Right cardiac atrium (tissue), 5 donors: ENCODE measurements at regions of chr20 and their contacts with region 1.

Region 1: GRCh38 chr20:2172305-2173175 is 70.9 kb downstream of the STK35 start:
- DNase-seq: peak; percentile 68 to 87 (median 79)
- ATAC-seq: peak; percentile 75 to 89
- H3K4me3 ChIP-seq: no peak overlapping the region
- H3K27ac ChIP-seq: no peak overlapping the region
- H3K4me1 ChIP-seq: peaks cover 2% of the 10 kb centered on the region
- H3K27me3 ChIP-seq: no peaks in the 10 kb centered on the region

Region 2: DNA sequence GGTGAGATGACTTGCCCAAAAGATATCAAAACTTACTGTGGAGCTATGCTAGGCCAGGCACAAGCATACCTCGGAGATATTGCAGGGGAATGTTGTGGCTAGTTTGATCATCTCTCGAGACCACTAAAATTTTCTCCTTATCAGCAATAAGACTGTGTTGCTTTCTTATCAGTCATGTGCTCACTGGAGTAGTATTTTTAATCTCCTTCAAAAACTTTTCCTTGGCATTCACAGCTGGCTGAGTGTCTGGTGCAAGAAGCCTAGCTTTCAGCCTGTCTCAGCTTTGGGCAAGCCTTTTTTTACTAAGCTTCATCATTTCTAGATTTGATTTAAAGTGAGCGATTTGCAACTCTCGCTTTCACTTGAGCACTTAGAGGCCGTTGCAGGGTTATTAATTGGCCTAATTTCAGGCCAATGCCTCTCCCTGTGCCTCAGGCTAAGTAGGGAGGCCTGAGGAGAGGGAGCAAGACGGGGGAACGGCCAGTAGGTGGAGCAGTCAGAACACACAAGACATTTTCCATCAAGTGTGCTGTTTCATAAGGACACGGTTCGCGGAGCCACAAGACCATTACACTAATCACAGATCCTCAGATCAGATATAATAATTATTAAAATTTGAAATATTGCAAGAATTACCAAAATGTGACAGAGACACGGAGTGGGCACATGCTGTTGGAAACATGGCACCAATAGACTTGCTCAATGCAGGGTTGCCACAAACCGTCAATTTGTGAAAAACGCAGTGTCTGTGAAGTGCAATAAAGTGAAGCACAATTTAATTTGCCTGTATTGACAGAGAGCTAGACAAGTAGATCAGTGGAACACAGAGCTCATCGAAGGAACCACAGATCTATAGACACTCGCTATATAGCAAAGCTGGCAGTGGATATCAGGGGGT is 408.2 kb before region 1 on chr20:
- intact Hi-C with region 1: loop called in 2 of 4 experiments (anchors 10 kb)
- DNase-seq: peak; percentile 79 to 92 (median 87)
- ATAC-seq: peak; percentile 93 to 95
- H3K4me3 ChIP-seq: no peak overlapping the region
- H3K27ac ChIP-seq: no peak overlapping the region
- H3K4me1 ChIP-seq: no peaks in the 10 kb centered on the region
- H3K27me3 ChIP-seq: no peaks in the 10 kb centered on the region

Region 3: GRCh38 chr20:1965520-1966351 is 206.8 kb before region 1 on chr20:
- intact Hi-C with region 1: loop called (anchors 2 to 10 kb)
- DNase-seq: peak; percentile 75 to 93 (median 88)
- ATAC-seq: peak; percentile 78 to 88
- H3K4me3 ChIP-seq: no peak overlapping the region
- H3K27ac ChIP-seq: no peak overlapping the region
- H3K4me1 ChIP-seq: no peaks in the 10 kb centered on the region
- H3K27me3 ChIP-seq: no peaks in the 10 kb centered on the region

Region 4: GRCh38 chr20:2086177-2086979 is 86.2 kb before region 1 on chr20:
- intact Hi-C with region 1: loop called (anchors 2 to 10 kb)
- DNase-seq: no peak
- ATAC-seq: peak in 1 of 2 donors; percentile 41
- H3K4me3 ChIP-seq: no peak overlapping the region
- H3K27ac ChIP-seq: no peak overlapping the region
- H3K4me1 ChIP-seq: peaks cover 2% of the 10 kb centered on the region
- H3K27me3 ChIP-seq: no peaks in the 10 kb centered on the region